Adrenal gland (tissue), 19 donors: ENCODE measurements at regions of chr1 and their contacts with region 1.

Region 1: GRCh38 chr1:226121587-226122400 is 59.3 kb downstream of the H3-3A start:
- DNase-seq: peak in 5 of 7 donors; percentile 34 to 70 (median 57)
- H3K4me3 ChIP-seq: peak overlapping the region in 3 of 4 donors; percentile 33 to 88 (median 34)
- H3K27ac ChIP-seq: peak overlapping the region in 2 of 5 donors; percentile 26 to 64
- H3K4me1 ChIP-seq: peaks cover 4 to 12% of the 10 kb centered on the region in 2 donors
- H3K27me3 ChIP-seq: peaks cover 8% of the 10 kb centered on the region
- CTCF ChIP-seq: peak in 5 of 6 experiments; percentile 26 to 93 (median 92)
- POLR2A ChIP-seq: no peak

Region 2: DNA sequence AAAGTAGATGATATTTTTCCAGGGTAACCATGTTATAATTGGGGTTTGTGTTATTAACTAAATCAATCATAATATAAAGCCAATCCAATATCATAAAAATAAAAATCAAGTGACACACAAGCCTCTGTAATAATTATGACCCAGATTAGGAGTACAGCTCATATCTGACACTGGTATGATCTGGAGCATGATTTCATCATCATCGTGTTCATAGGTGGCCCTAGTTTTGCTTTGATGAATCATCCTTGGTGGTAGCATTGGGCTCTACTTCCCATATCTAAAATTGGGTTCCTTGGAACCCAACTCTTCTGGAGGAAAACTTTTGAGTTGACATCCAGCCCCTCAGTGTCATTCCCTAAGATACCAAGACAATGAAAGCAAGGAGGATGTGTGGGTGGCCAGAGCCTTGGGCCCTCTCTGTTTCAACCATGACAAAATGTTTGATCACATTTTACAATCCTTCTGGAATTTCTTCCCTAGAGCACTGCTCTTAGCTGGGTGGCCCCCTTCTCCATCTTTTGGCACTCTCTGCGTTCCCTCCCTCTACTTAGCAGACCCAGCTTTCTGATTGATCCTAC is 431.8 kb before region 1 on chr1:
- intact Hi-C with region 1: no loop called
- DNase-seq: no peak
- H3K4me3 ChIP-seq: no peak overlapping the region
- H3K27ac ChIP-seq: no peak overlapping the region
- H3K4me1 ChIP-seq: peaks cover 8 to 20% of the 10 kb centered on the region in 2 donors
- H3K27me3 ChIP-seq: no peaks in the 10 kb centered on the region
- CTCF ChIP-seq: no peak
- POLR2A ChIP-seq: no peak

Region 3: DNA sequence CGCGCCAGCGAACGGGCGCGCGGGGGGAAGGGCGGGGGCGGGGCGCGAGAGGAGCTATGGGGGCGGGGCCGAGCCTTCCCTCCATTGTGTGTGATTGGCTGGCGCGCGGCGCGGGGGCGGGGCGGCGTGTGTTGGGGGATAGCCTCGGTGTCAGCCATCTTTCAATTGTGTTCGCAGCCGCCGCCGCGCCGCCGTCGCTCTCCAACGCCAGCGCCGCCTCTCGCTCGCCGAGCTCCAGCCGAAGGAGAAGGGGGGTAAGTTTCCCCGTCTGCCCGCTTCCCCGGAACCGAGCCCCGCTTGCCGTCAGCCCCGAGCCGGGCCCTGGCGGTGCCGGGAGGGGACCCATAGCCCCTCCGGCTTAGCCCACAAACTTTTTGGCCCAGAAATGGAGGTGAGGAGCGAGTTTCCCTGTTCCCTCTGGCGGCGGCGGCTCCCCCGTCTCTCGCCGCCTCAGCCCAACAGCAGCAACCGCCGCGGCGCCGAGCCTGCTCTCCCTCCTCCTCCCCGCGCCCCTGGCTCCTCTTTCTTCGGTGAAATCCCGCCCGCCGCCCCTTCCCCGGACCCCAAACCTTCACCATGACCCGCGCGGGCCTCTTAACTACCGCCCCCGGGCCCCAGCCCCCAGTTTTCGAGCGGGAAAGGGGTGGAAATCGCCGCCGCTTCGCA is 59.1 kb before region 1 on chr1 and contains the start of gene H3-3A:
- intact Hi-C with region 1: loop called (anchors 2 to 5 kb)
- DNase-seq: peak; percentile 98 to 99 (median 99)
- H3K4me3 ChIP-seq: peak within 1 kb of the TSS; percentile 69 to 95 (median 84)
- H3K27ac ChIP-seq: peak within 1 kb of the TSS; percentile 99
- H3K4me1 ChIP-seq: peaks cover 6 to 44% of the 10 kb centered on the region in 2 donors
- H3K27me3 ChIP-seq: no peaks in the 10 kb centered on the region
- CTCF ChIP-seq: peak in 1 of 6 experiments; percentile 29
- POLR2A ChIP-seq: peak; percentile 98 to 100
- total RNA-seq, gene H3-3A: 216 to 543 (median 373) TPM

Region 4: GRCh38 chr1:226195144-226195543 is 73.3 kb after region 1 on chr1:
- intact Hi-C with region 1: loop called (anchors 2 to 5 kb)
- DNase-seq: no peak
- H3K4me3 ChIP-seq: no peak overlapping the region
- H3K27ac ChIP-seq: no peak overlapping the region
- H3K4me1 ChIP-seq: no peaks in the 10 kb centered on the region
- H3K27me3 ChIP-seq: no peaks in the 10 kb centered on the region
- CTCF ChIP-seq: no peak
- POLR2A ChIP-seq: no peak

Region 5: GRCh38 chr1:226332947-226333346 is 211.2 kb after region 1 on chr1:
- intact Hi-C with region 1: loop called (anchors 5 kb)
- DNase-seq: no peak
- H3K4me3 ChIP-seq: no peak overlapping the region
- H3K27ac ChIP-seq: no peak overlapping the region
- H3K4me1 ChIP-seq: no peaks in the 10 kb centered on the region
- H3K27me3 ChIP-seq: no peaks in the 10 kb centered on the region
- CTCF ChIP-seq: no peak
- POLR2A ChIP-seq: no peak